Ascending aorta (tissue), 2 donors: ENCODE measurements at regions of chr5 and their contacts with region 1.

Region 1: DNA sequence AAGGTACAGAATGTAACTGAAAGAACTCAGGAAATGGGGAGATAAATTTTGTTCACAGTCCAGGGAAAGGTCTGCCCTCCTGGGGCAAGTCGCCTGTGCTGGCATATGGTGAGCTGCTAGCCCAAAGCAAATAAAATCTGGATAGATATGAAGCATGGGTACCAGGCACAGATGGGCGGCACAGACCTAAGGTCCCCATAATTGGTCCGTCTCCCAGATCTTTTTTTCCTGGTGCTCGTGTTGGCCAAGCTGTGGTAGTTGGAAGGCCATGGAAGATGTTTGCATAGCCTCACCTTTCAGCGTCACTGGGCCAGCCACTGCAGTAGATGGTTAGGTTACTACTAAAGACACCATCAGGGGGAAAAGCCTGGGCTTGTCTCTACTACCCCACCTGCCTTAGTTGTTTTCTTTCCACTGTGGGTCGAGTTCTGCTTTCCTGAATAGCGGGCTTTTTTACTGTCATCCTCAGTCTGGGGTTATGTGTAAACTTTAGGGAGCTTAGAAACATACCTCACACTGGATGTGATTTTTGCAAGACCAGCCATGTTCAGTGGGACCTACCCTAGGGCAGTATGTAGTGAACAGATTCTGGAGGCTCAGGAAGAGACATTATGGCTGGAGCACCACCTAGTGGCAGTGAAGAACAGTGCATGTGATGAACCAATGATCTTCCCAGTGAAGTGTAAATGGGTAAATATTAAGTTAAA is 24.2 kb upstream of the GLRX start:
- DNase-seq: peak in 1 of 2 donors; percentile 78
- H3K4me3 ChIP-seq: no peak overlapping the region
- H3K27ac ChIP-seq: peak overlapping the region in 1 of 2 donors; percentile 29
- H3K4me1 ChIP-seq: peaks cover 0 to 3% of the 10 kb centered on the region in 2 donors
- H3K27me3 ChIP-seq: no peaks in the 10 kb centered on the region
- CTCF ChIP-seq: peak; percentile 87 to 92 (median 91)

Region 2: DNA sequence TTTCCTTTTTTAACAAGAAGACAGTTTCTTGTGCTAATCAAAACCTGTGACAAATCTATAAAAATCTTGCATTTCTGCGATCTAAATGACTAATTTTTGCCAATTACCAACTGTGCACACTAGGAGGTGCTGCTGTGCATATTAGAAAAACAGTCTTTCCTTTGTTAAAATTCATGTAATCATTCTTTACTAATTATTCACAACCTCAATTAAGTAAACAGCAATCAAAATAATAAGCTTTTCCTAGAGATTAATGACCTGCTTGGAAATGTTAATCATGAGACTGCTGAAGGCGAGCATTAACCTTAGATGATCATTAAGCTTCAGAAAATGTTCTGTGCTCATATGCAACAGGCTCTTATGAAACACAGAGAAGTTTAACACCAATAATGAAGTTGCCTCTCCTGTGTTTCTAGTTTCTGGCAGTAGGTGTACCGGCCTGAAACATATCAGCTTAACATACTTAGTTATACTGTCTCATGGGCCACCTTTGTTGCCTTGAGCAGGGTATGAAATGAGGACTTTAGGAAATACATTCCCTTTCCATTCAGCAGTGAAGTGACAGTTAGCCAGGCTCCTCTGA is 182.4 kb before region 1 on chr5:
- intact Hi-C with region 1: loop called (anchors 2 kb)
- DNase-seq: no peak
- H3K4me3 ChIP-seq: no peak overlapping the region
- H3K27ac ChIP-seq: no peak overlapping the region
- H3K4me1 ChIP-seq: no peaks in the 10 kb centered on the region
- H3K27me3 ChIP-seq: no peaks in the 10 kb centered on the region
- CTCF ChIP-seq: peak; percentile 60 to 81 (median 68)

Region 3: GRCh38 chr5:95730730-95731570 is 115.8 kb before region 1 on chr5 and contains the start of gene RHOBTB3:
- intact Hi-C with region 1: loop called (anchors 5 kb)
- DNase-seq: peak; percentile 50 to 90
- H3K4me3 ChIP-seq: peak within 1 kb of the TSS; percentile 72 to 94
- H3K27ac ChIP-seq: peak within 1 kb of the TSS; percentile 89
- H3K4me1 ChIP-seq: peaks cover 0 to 22% of the 10 kb centered on the region in 2 donors
- H3K27me3 ChIP-seq: no peaks in the 10 kb centered on the region
- CTCF ChIP-seq: no peak
- total RNA-seq, gene RHOBTB3: 153 TPM

Region 4: DNA sequence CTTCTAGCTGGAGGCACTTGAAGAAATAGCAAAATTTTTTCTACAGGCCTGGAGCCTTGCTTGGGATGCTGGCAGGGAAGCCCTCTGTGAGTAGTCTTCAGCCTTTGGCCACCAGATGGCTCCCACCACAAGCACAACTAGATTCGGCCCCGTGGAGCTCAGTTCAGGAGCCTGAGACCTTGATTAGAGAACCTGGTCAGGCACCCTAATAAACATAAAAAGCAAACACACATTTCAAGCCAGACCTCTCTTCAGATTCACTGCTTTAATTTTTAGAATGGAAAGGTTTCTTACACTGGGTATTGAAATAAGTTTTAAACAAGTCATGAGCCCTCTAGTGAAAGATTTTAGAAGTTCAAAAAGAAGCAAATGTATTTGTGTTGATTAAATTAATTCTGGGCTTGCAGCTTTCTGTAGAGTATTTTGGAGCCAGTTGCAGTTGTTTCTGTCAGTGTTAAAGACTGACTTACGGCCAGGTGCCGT is 65.6 kb before region 1 on chr5:
- intact Hi-C with region 1: loop called (anchors 1 kb)
- DNase-seq: peak; percentile 32 to 92
- H3K4me3 ChIP-seq: no peak overlapping the region
- H3K27ac ChIP-seq: peak overlapping the region; percentile 54 to 73
- H3K4me1 ChIP-seq: peaks cover 0 to 12% of the 10 kb centered on the region in 2 donors
- H3K27me3 ChIP-seq: no peaks in the 10 kb centered on the region
- CTCF ChIP-seq: peak; percentile 87 to 89 (median 88)

Region 5: GRCh38 chr5:95835682-95836385 is 10.9 kb before region 1 on chr5:
- intact Hi-C with region 1: no loop called
- DNase-seq: peak in 1 of 2 donors; percentile 82
- H3K4me3 ChIP-seq: peak overlapping the region; percentile 75 to 89
- H3K27ac ChIP-seq: peak overlapping the region; percentile 89 to 90
- H3K4me1 ChIP-seq: peaks cover 3 to 19% of the 10 kb centered on the region in 2 donors
- H3K27me3 ChIP-seq: no peaks in the 10 kb centered on the region
- CTCF ChIP-seq: no peak

Region 6: DNA sequence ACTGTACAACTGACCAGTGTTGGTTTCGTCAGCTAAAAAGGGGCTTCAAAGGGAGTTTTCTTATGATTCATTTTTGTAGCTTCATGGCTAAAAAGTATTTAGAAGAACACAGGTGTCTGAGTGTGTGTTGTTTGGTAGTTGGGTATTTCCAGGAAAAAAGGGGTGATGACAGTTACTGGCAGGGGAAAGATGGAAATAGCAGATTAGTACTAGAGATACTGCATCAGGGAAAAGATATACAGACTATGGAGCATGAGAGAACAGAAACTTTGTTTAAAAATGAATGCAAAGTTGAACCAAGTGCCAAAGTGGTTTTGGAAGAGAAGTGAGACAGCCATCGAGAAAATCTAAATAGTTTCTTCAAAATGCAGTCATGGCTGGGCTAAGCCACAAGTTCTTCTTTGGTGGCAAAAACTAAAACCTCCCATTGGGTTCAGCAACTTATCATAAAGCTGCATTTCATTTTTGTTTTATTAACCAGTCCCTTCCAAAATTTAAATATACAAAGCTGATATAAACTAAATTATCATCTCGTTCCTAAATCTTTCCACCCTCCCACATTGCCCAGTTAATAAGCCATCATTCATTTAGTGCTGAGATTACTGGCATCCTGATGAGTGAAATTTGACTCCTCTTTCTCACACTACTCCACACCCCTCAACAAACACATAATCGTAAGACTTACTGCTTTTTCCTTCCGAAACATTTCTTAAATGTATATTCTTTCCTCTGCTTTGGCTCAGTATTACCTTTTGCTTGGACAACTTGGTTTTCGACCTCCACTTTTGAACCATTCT is 81.4 kb after region 1 on chr5:
- intact Hi-C with region 1: no loop called
- DNase-seq: no peak
- H3K4me3 ChIP-seq: no peak overlapping the region
- H3K27ac ChIP-seq: no peak overlapping the region
- H3K4me1 ChIP-seq: peaks cover 0 to 30% of the 10 kb centered on the region in 2 donors
- H3K27me3 ChIP-seq: no peaks in the 10 kb centered on the region
- CTCF ChIP-seq: no peak